Aorta (tissue), 5 donors: ENCODE measurements at regions of chr11 and their contacts with region 1.

Region 1: GRCh38 chr11:101456812-101457211 is 127.0 kb downstream of the TRPC6 start:
- DNase-seq: no peak
- ATAC-seq: no peak
- H3K4me3 ChIP-seq: no peak overlapping the region
- H3K27ac ChIP-seq: no peak overlapping the region
- H3K4me1 ChIP-seq: no peaks in the 10 kb centered on the region
- H3K27me3 ChIP-seq: no peaks in the 10 kb centered on the region

Region 2: GRCh38 chr11:101288392-101288791 is 168.4 kb before region 1 on chr11:
- intact Hi-C with region 1: no loop called
- DNase-seq: no peak
- ATAC-seq: no peak
- H3K4me3 ChIP-seq: no peak overlapping the region
- H3K27ac ChIP-seq: no peak overlapping the region
- H3K4me1 ChIP-seq: no peaks in the 10 kb centered on the region
- H3K27me3 ChIP-seq: no peaks in the 10 kb centered on the region

Region 3: DNA sequence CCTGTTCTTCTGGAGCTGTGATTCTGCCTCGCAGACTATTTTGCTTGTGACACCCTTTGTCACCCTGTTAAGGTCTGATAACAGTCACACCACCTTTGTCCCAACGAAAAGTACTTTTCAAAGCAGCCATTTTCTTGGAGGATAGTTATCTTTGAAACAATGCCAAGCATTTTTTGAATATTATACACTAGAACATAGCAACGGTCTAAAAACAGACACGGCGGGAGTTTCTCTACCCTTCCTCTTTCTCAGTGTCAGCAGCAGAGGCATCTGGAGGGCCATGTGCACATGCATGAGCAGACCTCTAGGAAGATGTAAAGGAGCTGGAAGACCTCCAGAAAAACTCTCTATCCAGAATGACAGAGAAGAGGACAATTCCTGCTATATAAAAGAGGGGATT is 40.5 kb after region 1 on chr11:
- intact Hi-C with region 1: no loop called
- DNase-seq: peak in 1 of 2 donors; percentile 42
- ATAC-seq: no peak
- H3K4me3 ChIP-seq: no peak overlapping the region
- H3K27ac ChIP-seq: no peak overlapping the region
- H3K4me1 ChIP-seq: no peaks in the 10 kb centered on the region
- H3K27me3 ChIP-seq: no peaks in the 10 kb centered on the region

Region 4: DNA sequence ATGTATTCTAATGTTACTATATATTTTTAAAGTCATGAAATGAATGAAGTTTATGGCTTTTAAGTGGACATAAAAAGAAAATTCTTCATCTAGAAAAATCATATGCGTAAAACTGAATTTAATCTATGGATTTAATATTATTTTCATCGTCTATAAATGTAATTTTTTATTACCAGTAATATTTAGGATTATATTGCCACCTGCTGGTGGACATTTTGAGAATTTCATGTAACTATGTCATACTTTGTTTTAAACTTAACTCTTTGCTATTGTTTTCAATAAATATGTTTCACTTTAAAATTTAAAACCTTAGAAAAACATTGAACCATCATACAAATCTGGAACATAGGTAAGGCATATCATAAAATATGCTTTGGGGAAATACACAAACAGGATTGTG is 391.4 kb after region 1 on chr11:
- intact Hi-C with region 1: loop called (anchors 5 kb)
- DNase-seq: no peak
- ATAC-seq: no peak
- H3K4me3 ChIP-seq: no peak overlapping the region
- H3K27ac ChIP-seq: no peak overlapping the region
- H3K4me1 ChIP-seq: no peaks in the 10 kb centered on the region
- H3K27me3 ChIP-seq: no peaks in the 10 kb centered on the region

Region 5: GRCh38 chr11:102007567-102008437 is 551.0 kb after region 1 on chr11:
- intact Hi-C with region 1: loop called in 1 of 2 experiments (anchors 10 kb)
- DNase-seq: no peak
- ATAC-seq: peak; percentile 47
- H3K4me3 ChIP-seq: no peak overlapping the region
- H3K27ac ChIP-seq: no peak overlapping the region
- H3K4me1 ChIP-seq: peaks cover 0 to 3% of the 10 kb centered on the region in 2 donors
- H3K27me3 ChIP-seq: no peaks in the 10 kb centered on the region

Region 6: GRCh38 chr11:102703826-102704493 is 1247.1 kb after region 1 on chr11:
- intact Hi-C with region 1: no loop called
- DNase-seq: no peak
- ATAC-seq: no peak
- H3K4me3 ChIP-seq: no peak overlapping the region
- H3K27ac ChIP-seq: no peak overlapping the region
- H3K4me1 ChIP-seq: no peaks in the 10 kb centered on the region
- H3K27me3 ChIP-seq: no peaks in the 10 kb centered on the region